H1 (cell line): ENCODE measurements at regions of chr13 and their contacts with region 1.

Region 1: GRCh38 chr13:20828539-20829364 is 55.0 kb upstream of the EEF1AKMT1 start:
- DNase-seq: no peak
- H3K4me3 ChIP-seq: no peak overlapping the region
- H3K27ac ChIP-seq: no peak overlapping the region
- H3K4me1 ChIP-seq: peaks cover 0 to 2% (median under 1%) of the 10 kb centered on the region in 4 experiments; a peak in 2 of 7 replicates
- H3K27me3 ChIP-seq: no peaks in the 10 kb centered on the region
- CTCF ChIP-seq: peak in 2 of 3 experiments; percentile 50 to 62; a peak in 3 of 4 replicates
- EP300 ChIP-seq: no peak
- POLR2A ChIP-seq: no peak
- RAD21 ChIP-seq: peak; percentile 53 to 60

Region 2: DNA sequence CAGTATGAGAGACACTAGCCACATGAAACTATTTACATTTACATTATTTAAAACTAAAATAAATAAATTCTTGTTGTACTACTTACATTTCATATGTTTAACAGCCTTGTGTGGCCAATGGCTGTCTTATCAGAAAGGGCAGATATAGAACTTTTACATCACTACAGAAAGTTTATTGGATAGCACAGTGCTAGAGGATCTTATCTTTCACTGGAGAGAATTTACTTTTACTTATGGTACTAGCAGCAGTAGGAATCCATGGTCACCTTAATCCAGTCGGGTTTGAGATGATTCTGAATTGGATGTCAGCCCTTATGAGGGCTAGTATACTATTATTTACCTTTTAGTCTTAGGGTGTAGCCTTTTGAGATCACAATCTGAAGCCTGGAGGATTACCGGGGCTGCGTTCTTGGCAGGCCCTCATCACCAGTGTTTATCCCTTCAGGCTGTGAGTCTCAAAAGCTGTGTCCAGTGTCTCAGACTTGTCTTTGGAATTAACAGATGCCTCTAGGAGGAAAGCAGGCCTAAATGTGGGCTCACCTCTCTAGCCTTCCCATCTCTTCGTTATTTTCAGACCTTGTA is 240.1 kb before region 1 on chr13:
- CTCF ChIA-PET with region 1: no interaction called
- POLR2A ChIA-PET with region 1: no interaction called
- DNase-seq: no peak
- H3K4me3 ChIP-seq: no peak overlapping the region
- H3K27ac ChIP-seq: no peak overlapping the region
- H3K4me1 ChIP-seq: no peaks in the 10 kb centered on the region
- H3K27me3 ChIP-seq: peaks cover 0 to 1% (median 0%) of the 10 kb centered on the region in 4 experiments; a peak in 1 of 7 replicates
- CTCF ChIP-seq: no peak
- EP300 ChIP-seq: no peak
- POLR2A ChIP-seq: no peak
- RAD21 ChIP-seq: no peak

Region 3: GRCh38 chr13:20654156-20654555 is 174.6 kb before region 1 on chr13:
- CTCF ChIA-PET with region 1: no interaction called
- POLR2A ChIA-PET with region 1: no interaction called
- DNase-seq: no peak
- H3K4me3 ChIP-seq: no peak overlapping the region
- H3K27ac ChIP-seq: no peak overlapping the region
- H3K4me1 ChIP-seq: no peaks in the 10 kb centered on the region
- H3K27me3 ChIP-seq: no peaks in the 10 kb centered on the region
- CTCF ChIP-seq: no peak
- EP300 ChIP-seq: no peak
- POLR2A ChIP-seq: no peak
- RAD21 ChIP-seq: no peak

Region 4: GRCh38 chr13:20713751-20714150 is 115.0 kb before region 1 on chr13:
- CTCF ChIA-PET with region 1: interaction called, 11 read pairs
- POLR2A ChIA-PET with region 1: no interaction called
- DNase-seq: no peak
- H3K4me3 ChIP-seq: no peak overlapping the region
- H3K27ac ChIP-seq: no peak overlapping the region
- H3K4me1 ChIP-seq: peaks cover 2 to 9% (median 6%) of the 10 kb centered on the region in 4 experiments; a peak in 4 of 7 replicates
- H3K27me3 ChIP-seq: no peaks in the 10 kb centered on the region
- CTCF ChIP-seq: no peak
- EP300 ChIP-seq: no peak
- POLR2A ChIP-seq: no peak
- RAD21 ChIP-seq: no peak

Region 5: GRCh38 chr13:20815469-20815868 is 13.3 kb before region 1 on chr13:
- CTCF ChIA-PET with region 1: interaction called, 24 read pairs
- POLR2A ChIA-PET with region 1: no interaction called
- DNase-seq: no peak
- H3K4me3 ChIP-seq: no peak overlapping the region
- H3K27ac ChIP-seq: no peak overlapping the region
- H3K4me1 ChIP-seq: no peaks in the 10 kb centered on the region
- H3K27me3 ChIP-seq: no peaks in the 10 kb centered on the region
- CTCF ChIP-seq: no peak
- EP300 ChIP-seq: no peak
- POLR2A ChIP-seq: no peak
- RAD21 ChIP-seq: no peak

Region 6: DNA sequence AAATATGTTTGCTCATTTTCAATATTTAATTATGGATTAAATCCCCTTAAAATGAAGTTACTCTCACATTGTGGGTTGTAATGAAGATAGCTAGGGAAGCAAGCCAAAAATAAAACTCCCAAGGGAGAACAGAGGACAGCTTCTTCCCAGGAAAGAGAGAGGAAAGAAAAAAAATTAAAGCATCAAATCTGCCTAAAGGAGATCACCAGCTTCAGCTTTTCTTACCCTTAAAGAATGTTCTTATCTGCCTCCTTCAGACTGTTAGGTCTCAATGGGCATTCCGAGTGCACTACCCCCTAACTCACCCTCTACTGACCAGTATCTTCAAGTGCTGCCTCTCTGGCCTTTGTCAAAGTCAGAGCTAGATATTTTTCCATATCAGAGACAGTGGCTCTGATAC is 18.5 kb after region 1 on chr13:
- CTCF ChIA-PET with region 1: interaction called, 21 read pairs
- POLR2A ChIA-PET with region 1: interaction called, 3 read pairs
- DNase-seq: no peak
- H3K4me3 ChIP-seq: no peak overlapping the region
- H3K27ac ChIP-seq: no peak overlapping the region
- H3K4me1 ChIP-seq: no peaks in the 10 kb centered on the region
- H3K27me3 ChIP-seq: no peaks in the 10 kb centered on the region
- CTCF ChIP-seq: no peak
- EP300 ChIP-seq: no peak
- POLR2A ChIP-seq: no peak
- RAD21 ChIP-seq: no peak